HCT116 (cell line): ENCODE measurements at regions of chr16 and their contacts with region 1.

Region 1: GRCh38 chr16:70372921-70373728 is 26.4 kb downstream of the DDX19A start:
- DNase-seq: no peak
- ATAC-seq: no peak
- H3K4me3 ChIP-seq: no peak overlapping the region
- H3K27ac ChIP-seq: no peak overlapping the region
- H3K4me1 ChIP-seq: no peaks in the 10 kb centered on the region; a peak in 1 of 4 replicates
- H3K27me3 ChIP-seq: no peaks in the 10 kb centered on the region
- CTCF ChIP-seq: no peak
- POLR2A ChIP-seq: no peak
- RAD21 ChIP-seq: no peak

Region 2: DNA sequence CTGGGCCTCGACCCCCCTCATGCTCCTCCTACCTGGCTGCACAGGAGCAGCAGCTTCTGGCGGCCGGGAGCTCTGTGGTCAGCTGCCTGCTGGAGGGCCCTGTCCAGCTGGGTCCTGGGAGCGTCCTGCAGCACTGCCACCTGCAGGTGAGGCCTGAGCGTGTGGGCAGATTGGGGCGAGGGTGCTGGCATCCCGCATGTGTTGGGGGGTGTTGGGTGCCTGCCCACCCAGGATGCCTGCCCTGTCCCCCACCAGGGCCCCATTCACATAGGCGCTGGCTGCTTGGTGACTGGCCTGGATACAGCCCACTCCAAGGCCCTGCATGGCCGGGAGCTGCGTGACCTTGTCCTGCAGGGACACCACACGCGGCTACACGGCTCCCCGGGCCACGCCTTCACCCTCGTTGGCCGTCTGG is 97.8 kb after region 1 on chr16:
- CTCF ChIA-PET with region 1: interaction called, 4 read pairs
- POLR2A ChIA-PET with region 1: no interaction called
- RAD21 ChIA-PET with region 1: no interaction called
- intact Hi-C with region 1: loop called (anchors 5 kb)
- DNase-seq: no peak
- ATAC-seq: peak; percentile 64
- H3K4me3 ChIP-seq: no peak overlapping the region
- H3K27ac ChIP-seq: no peak overlapping the region
- H3K4me1 ChIP-seq: peaks cover 12 to 13% of the 10 kb centered on the region in 2 experiments
- H3K27me3 ChIP-seq: no peaks in the 10 kb centered on the region
- CTCF ChIP-seq: peak; percentile 29 to 62 (median 43); a peak in 5 of 6 replicates
- POLR2A ChIP-seq: no peak
- RAD21 ChIP-seq: peak; percentile 75

Region 3: DNA sequence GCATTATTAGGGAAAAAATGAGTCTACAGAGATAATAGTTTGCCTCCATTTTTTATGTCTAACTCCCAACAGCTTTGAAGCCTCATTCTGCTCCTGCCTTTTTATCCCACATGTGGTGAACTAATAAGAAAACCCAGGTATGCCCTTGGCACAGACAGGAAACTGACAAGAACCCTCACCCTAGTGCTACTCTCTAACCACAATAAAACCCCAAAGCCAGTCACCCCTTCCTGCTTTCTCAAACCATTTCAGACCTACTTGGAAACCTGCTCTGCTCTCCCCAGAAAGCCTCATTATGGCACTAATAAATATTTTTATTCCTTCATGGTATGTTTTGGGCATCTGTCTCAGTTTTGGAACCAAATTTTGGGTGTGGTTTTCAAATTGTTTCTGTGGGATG is 1249.0 kb after region 1 on chr16:
- CTCF ChIA-PET with region 1: no interaction called
- POLR2A ChIA-PET with region 1: no interaction called
- RAD21 ChIA-PET with region 1: no interaction called
- intact Hi-C with region 1: no loop called
- DNase-seq: no peak
- ATAC-seq: no peak
- H3K4me3 ChIP-seq: no peak overlapping the region
- H3K27ac ChIP-seq: no peak overlapping the region
- H3K4me1 ChIP-seq: peaks cover 2 to 5% of the 10 kb centered on the region in 2 experiments; a peak in 2 of 4 replicates
- H3K27me3 ChIP-seq: no peaks in the 10 kb centered on the region
- CTCF ChIP-seq: no peak
- POLR2A ChIP-seq: no peak
- RAD21 ChIP-seq: no peak